ENCODE measurements at regions of chrX and their contacts with region 1.

Region 1: DNA sequence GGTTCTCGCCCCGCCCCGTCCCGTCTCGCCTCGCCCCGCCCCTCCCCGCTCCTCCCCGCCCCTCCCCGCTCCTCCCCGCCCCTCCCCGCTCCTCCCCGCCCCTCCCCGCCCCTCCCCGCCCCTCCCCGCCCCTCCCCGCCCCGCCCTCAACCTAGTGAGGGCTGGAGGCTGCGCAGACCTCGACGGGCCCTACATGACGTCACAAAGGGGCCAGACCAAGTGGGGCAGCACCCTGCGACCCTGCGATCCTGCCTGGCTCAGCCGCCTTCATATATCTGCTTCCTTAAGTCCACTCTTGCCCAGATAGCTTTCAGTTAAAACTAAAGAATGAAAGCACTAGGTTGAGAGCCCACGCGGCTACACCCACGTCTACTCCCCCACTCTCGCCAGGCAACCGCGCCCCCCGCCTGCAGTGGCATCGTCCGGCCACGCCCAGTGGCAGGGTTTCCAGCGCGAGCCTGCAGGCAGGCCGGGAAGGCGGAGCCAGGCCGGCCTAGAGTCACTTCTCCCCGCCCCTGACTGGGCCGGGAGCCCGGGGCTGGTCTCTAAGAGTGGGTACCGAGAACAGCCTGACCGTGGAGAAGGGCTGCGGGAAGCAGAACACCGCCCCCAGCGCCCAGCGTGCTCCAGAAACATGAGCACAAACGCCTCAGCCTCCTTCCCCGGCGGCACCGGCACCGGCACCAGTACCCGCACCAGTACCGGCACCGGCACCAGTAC is 1.5 kb upstream of the MAOA start:
- DNase-seq: peak; percentile 71 to 79
- H3K4me3 ChIP-seq: peak overlapping the region; percentile 56
- H3K27ac ChIP-seq: peak overlapping the region; percentile 80
- H3K4me1 ChIP-seq: no peaks in the 10 kb centered on the region
- H3K27me3 ChIP-seq: no peaks in the 10 kb centered on the region
- CTCF ChIP-seq: no peak; the same call in 1 of the 2 replicates

Region 2: DNA sequence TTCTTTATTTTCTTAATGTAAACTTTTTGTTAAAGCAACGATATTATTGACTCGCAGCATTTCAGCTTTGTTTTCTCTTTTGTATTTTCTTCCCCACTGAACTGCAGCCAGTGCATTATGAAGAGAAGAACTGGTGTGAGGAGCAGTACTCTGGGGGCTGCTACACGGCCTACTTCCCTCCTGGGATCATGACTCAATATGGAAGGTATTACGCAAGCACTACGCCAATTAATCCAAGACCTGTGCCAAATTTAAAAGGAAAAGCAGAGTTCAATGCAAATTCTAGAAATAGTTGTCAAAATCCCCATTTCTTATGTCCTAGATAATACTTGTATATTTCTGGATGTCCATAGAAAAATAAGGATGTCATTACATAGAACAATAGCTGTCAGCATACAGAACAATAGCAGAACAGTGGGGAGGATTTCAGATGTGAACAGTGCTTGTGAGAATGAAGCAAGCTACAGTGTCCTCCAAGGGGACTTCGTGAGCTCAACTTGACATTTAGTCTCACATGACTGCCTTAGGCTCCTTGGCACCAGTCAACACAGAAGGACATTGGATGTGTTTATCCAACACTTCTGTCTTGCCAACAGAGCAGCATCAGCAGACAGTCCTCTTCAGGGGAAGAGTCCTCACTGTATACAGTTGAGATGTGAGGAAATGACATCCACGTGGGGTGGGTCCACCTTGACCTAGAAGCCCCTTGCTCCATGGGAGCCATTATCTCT is 87.4 kb after region 1 on chrX:
- CTCF ChIA-PET with region 1: no interaction called
- POLR2A ChIA-PET with region 1: no interaction called
- intact Hi-C with region 1: loop called (anchors 10 kb)
- DNase-seq: no peak
- H3K4me3 ChIP-seq: no peak overlapping the region
- H3K27ac ChIP-seq: no peak overlapping the region
- H3K4me1 ChIP-seq: no peaks in the 10 kb centered on the region
- H3K27me3 ChIP-seq: no peaks in the 10 kb centered on the region
- CTCF ChIP-seq: no peak

Region 3: GRCh38 chrX:43860646-43861370 is 206.2 kb after region 1 on chrX:
- CTCF ChIA-PET with region 1: no interaction called
- POLR2A ChIA-PET with region 1: no interaction called
- intact Hi-C with region 1: no loop called
- DNase-seq: peak in 1 of 2 experiments; percentile 7
- H3K4me3 ChIP-seq: no peak overlapping the region
- H3K27ac ChIP-seq: no peak overlapping the region
- H3K4me1 ChIP-seq: no peaks in the 10 kb centered on the region
- H3K27me3 ChIP-seq: no peaks in the 10 kb centered on the region
- CTCF ChIP-seq: no peak